HCT116 (cell line): ENCODE measurements at regions of chr5 and their contacts with region 1.

Region 1: GRCh38 chr5:59390074-59390659 is 503.4 kb downstream of the PDE4D start:
- DNase-seq: no peak
- ATAC-seq: no peak
- H3K4me3 ChIP-seq: no peak overlapping the region
- H3K27ac ChIP-seq: no peak overlapping the region
- H3K4me1 ChIP-seq: no peaks in the 10 kb centered on the region
- H3K27me3 ChIP-seq: peaks cover 11% of the 10 kb centered on the region
- CTCF ChIP-seq: peak; percentile 41 to 71 (median 44); a peak in 5 of 6 replicates
- POLR2A ChIP-seq: no peak
- RAD21 ChIP-seq: peak; percentile 56

Region 2: DNA sequence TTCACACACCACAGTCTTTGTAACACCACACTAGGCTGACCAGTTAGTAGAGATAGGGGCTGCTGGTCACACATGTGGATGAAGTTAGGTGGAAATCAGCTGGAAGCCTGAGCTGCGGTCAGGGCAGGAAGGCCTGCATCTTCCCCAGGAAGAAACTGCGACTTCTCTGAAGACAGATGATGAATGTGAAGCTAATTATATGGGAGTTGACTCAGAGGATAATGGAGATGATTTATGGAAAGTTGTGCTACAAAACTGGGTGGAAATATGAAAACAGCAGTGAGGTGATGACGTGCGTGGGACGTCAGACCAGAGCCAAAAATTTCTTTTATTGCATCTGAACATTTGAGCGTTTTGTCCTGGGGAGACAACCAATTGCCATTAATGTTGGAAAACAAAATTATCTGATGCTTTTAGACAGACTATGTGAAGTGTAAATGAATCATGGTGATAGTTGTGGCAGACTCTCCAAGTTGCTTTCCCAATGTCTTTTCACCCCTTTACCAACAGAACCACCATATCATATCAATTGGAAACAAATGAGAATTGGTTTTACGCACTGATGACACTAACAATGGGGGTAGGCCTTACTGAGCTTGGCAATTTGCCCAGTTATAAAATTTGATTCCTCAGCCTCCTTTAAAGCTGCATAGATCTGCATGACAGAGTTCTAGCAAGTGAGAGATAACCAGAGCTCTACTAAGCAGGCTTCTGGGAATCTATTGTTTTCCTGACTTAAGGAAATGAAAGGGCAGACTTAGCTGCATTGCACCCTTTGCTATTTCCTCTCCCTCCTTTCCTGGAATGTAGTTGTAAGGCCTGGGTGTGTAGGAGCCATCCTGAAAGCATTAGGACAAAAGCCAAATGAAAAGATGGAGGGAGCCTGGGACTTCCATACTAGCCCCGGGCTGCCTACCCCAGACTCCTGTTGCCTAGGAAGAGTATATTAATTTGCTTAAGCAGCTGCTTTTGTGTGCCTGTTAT is 723.3 kb before region 1 on chr5:
- CTCF ChIA-PET with region 1: no interaction called
- POLR2A ChIA-PET with region 1: no interaction called
- RAD21 ChIA-PET with region 1: no interaction called
- intact Hi-C with region 1: no loop called
- DNase-seq: no peak
- ATAC-seq: no peak
- H3K4me3 ChIP-seq: no peak overlapping the region
- H3K27ac ChIP-seq: no peak overlapping the region
- H3K4me1 ChIP-seq: no peaks in the 10 kb centered on the region
- H3K27me3 ChIP-seq: peaks cover 6% of the 10 kb centered on the region; the same call in 1 of the 2 replicates
- CTCF ChIP-seq: no peak
- POLR2A ChIP-seq: no peak
- RAD21 ChIP-seq: no peak

Region 3: GRCh38 chr5:59312223-59312622 is 77.9 kb before region 1 on chr5:
- CTCF ChIA-PET with region 1: no interaction called
- POLR2A ChIA-PET with region 1: no interaction called
- RAD21 ChIA-PET with region 1: no interaction called
- intact Hi-C with region 1: no loop called
- DNase-seq: no peak
- ATAC-seq: no peak
- H3K4me3 ChIP-seq: no peak overlapping the region
- H3K27ac ChIP-seq: no peak overlapping the region
- H3K4me1 ChIP-seq: no peaks in the 10 kb centered on the region
- H3K27me3 ChIP-seq: no peaks in the 10 kb centered on the region; the same call in 1 of the 2 replicates
- CTCF ChIP-seq: no peak
- POLR2A ChIP-seq: no peak
- RAD21 ChIP-seq: no peak

Region 4: GRCh38 chr5:59401637-59402036 is 11.5 kb after region 1 on chr5:
- CTCF ChIA-PET with region 1: no interaction called
- POLR2A ChIA-PET with region 1: no interaction called
- RAD21 ChIA-PET with region 1: no interaction called
- intact Hi-C with region 1: no loop called
- DNase-seq: no peak
- ATAC-seq: no peak
- H3K4me3 ChIP-seq: no peak overlapping the region
- H3K27ac ChIP-seq: no peak overlapping the region
- H3K4me1 ChIP-seq: no peaks in the 10 kb centered on the region
- H3K27me3 ChIP-seq: peaks cover 6% of the 10 kb centered on the region; the same call in 1 of the 2 replicates
- CTCF ChIP-seq: no peak
- POLR2A ChIP-seq: no peak
- RAD21 ChIP-seq: no peak

Region 5: GRCh38 chr5:59496524-59497134 is 106.5 kb after region 1 on chr5:
- CTCF ChIA-PET with region 1: interaction called, 4 read pairs
- POLR2A ChIA-PET with region 1: no interaction called
- RAD21 ChIA-PET with region 1: no interaction called
- intact Hi-C with region 1: loop called (anchors 2 kb)
- DNase-seq: no peak
- ATAC-seq: peak; percentile 80
- H3K4me3 ChIP-seq: no peak overlapping the region
- H3K27ac ChIP-seq: no peak overlapping the region
- H3K4me1 ChIP-seq: no peaks in the 10 kb centered on the region
- H3K27me3 ChIP-seq: peaks cover 8% of the 10 kb centered on the region
- CTCF ChIP-seq: peak; percentile 32 to 70 (median 62); a peak in 5 of 6 replicates
- POLR2A ChIP-seq: no peak
- RAD21 ChIP-seq: peak; percentile 38; the same call in 1 of the 2 replicates

Region 6: DNA sequence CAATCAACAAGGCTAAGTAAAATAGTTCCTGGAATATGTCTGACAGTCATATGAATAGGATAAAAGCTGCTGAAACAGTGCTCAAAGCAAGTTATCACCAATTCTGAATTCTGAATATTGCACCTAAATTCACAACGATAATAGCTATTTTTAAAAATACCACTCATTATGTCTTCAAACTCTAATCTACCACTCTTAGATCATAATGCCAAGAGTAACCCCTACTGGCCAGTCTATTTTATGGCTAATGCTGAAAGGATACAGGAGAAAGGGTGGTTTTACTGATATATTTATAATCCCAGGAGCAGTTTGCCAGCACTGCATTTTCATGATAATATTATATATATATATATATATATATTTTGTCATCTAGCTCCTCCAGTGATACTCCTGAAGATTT is 270.6 kb after region 1 on chr5:
- CTCF ChIA-PET with region 1: interaction called, 13 read pairs
- POLR2A ChIA-PET with region 1: no interaction called
- RAD21 ChIA-PET with region 1: no interaction called
- intact Hi-C with region 1: no loop called
- DNase-seq: no peak
- ATAC-seq: no peak
- H3K4me3 ChIP-seq: no peak overlapping the region
- H3K27ac ChIP-seq: no peak overlapping the region
- H3K4me1 ChIP-seq: no peaks in the 10 kb centered on the region
- H3K27me3 ChIP-seq: peaks cover 5% of the 10 kb centered on the region
- CTCF ChIP-seq: 0 out of 6 replicates have a peak, but pooled peaks of 2 of the 3 experiments have one; percentile 7 to 20
- POLR2A ChIP-seq: no peak
- RAD21 ChIP-seq: peak; percentile 28; the same call in 1 of the 2 replicates

Region 7: GRCh38 chr5:59673438-59674058 is 283.4 kb after region 1 on chr5:
- CTCF ChIA-PET with region 1: interaction called, 12 read pairs
- POLR2A ChIA-PET with region 1: no interaction called
- RAD21 ChIA-PET with region 1: no interaction called
- intact Hi-C with region 1: loop called (anchors 2 kb)
- DNase-seq: peak; percentile 8
- ATAC-seq: peak; percentile 55; the same call in 1 of the 2 replicates
- H3K4me3 ChIP-seq: no peak overlapping the region
- H3K27ac ChIP-seq: no peak overlapping the region
- H3K4me1 ChIP-seq: no peaks in the 10 kb centered on the region
- H3K27me3 ChIP-seq: 0 out of 2 replicates have a peak, but pooled peaks cover 5% of the 10 kb centered on the region
- CTCF ChIP-seq: peak; percentile 33 to 82 (median 64); a peak in 5 of 6 replicates
- POLR2A ChIP-seq: no peak
- RAD21 ChIP-seq: peak; percentile 57

Region 8: GRCh38 chr5:59724482-59725391 is 334.6 kb after region 1 on chr5:
- CTCF ChIA-PET with region 1: interaction called, 4 read pairs
- POLR2A ChIA-PET with region 1: no interaction called
- RAD21 ChIA-PET with region 1: no interaction called
- intact Hi-C with region 1: loop called (anchors 5 kb)
- DNase-seq: peak; percentile 12
- ATAC-seq: peak; percentile 83
- H3K4me3 ChIP-seq: no peak overlapping the region
- H3K27ac ChIP-seq: no peak overlapping the region
- H3K4me1 ChIP-seq: no peaks in the 10 kb centered on the region
- H3K27me3 ChIP-seq: 0 out of 2 replicates have a peak, but pooled peaks cover 3% of the 10 kb centered on the region
- CTCF ChIP-seq: peak; percentile 46 to 68 (median 66); a peak in 5 of 6 replicates
- POLR2A ChIP-seq: no peak
- RAD21 ChIP-seq: peak; percentile 50; the same call in 1 of the 2 replicates

Region 9: GRCh38 chr5:59799668-59800346 is 409.6 kb after region 1 on chr5:
- CTCF ChIA-PET with region 1: interaction called, 5 read pairs
- POLR2A ChIA-PET with region 1: no interaction called
- RAD21 ChIA-PET with region 1: interaction called in 1 of 2 experiments, 5 read pairs
- intact Hi-C with region 1: loop called (anchors 2 kb)
- DNase-seq: peak; percentile 37
- ATAC-seq: peak; percentile 74
- H3K4me3 ChIP-seq: no peak overlapping the region
- H3K27ac ChIP-seq: no peak overlapping the region
- H3K4me1 ChIP-seq: no peaks in the 10 kb centered on the region
- H3K27me3 ChIP-seq: no peaks in the 10 kb centered on the region; the same call in none of the 2 replicates
- CTCF ChIP-seq: peak; percentile 50 to 77 (median 54); a peak in 5 of 6 replicates
- POLR2A ChIP-seq: no peak
- RAD21 ChIP-seq: peak; percentile 72